Natural killer cell (primary cell): ENCODE measurements at regions of chr22 and their contacts with region 1.

Region 1: GRCh38 chr22:24325105-24325757 is 54.6 kb downstream of the SPECC1L start:
- DNase-seq: peak in 1 of 2 donors; percentile 74
- ATAC-seq: peak; percentile 57 to 78 (median 60)
- H3K4me3 ChIP-seq: no peak overlapping the region
- H3K4me3 Mint-ChIP-seq: no peak overlapping the region
- H3K27ac ChIP-seq: no peak overlapping the region
- H3K27ac Mint-ChIP-seq: peak overlapping the region in 1 of 2 donors; percentile 64
- H3K4me1 ChIP-seq: no peaks in the 10 kb centered on the region
- H3K4me1 Mint-ChIP-seq: peaks cover 8 to 12% of the 10 kb centered on the region in 2 donors
- H3K27me3 ChIP-seq: no peaks in the 10 kb centered on the region
- H3K27me3 Mint-ChIP-seq: no peaks in the 10 kb centered on the region
- CTCF ChIP-seq: peak; percentile 64

Region 2: DNA sequence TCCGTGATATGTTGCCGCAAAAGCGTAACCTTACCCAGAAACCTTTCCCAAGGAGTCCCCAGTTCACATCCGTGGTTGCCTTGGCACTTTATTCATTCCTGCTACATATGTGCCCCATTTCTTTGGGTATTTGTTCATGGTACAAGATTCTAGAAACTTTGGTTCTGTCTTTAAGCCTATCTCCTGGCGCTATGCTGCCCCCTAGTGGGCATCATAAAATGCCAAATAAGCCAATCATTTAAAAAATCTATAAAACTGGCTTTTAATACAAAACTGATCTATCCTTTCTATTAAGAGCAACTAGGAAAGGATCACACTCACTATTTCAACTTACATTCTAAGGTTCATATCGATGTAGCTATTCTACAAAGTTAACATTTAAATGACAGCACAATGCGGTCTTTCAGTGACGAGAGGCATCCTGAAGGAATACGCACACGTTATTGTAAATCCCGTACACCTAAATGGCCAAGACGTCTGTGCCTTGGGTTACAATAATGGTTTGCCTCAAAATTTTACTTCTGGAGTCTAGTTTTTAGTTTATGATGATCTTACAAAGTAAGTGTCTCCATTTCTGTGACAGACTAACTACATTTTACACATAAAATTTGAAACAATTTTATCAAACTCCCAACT is 433.1 kb after region 1 on chr22:
- intact Hi-C with region 1: loop called (anchors 10 kb)
- DNase-seq: peak; percentile 34 to 80
- ATAC-seq: peak in 1 of 3 donors; percentile 45
- H3K4me3 ChIP-seq: no peak overlapping the region
- H3K4me3 Mint-ChIP-seq: no peak overlapping the region
- H3K27ac ChIP-seq: no peak overlapping the region
- H3K27ac Mint-ChIP-seq: no peak overlapping the region
- H3K4me1 ChIP-seq: no peaks in the 10 kb centered on the region
- H3K4me1 Mint-ChIP-seq: no peaks in the 10 kb centered on the region
- H3K27me3 ChIP-seq: no peaks in the 10 kb centered on the region
- H3K27me3 Mint-ChIP-seq: peaks cover 0 to 10% of the 10 kb centered on the region in 2 donors
- CTCF ChIP-seq: peak; percentile 99